ENCODE measurements at regions of chr18 and their contacts with region 1.

Region 1: GRCh38 chr18:31819106-31819924 is 58.6 kb upstream of the SLC25A52 start:
- DNase-seq: no peak
- ATAC-seq: peak; percentile 63
- H3K4me3 Mint-ChIP-seq: no peak overlapping the region
- H3K27ac Mint-ChIP-seq: no peak overlapping the region
- H3K4me1 Mint-ChIP-seq: no peaks in the 10 kb centered on the region
- H3K27me3 Mint-ChIP-seq: peaks cover 2% of the 10 kb centered on the region

Region 2: DNA sequence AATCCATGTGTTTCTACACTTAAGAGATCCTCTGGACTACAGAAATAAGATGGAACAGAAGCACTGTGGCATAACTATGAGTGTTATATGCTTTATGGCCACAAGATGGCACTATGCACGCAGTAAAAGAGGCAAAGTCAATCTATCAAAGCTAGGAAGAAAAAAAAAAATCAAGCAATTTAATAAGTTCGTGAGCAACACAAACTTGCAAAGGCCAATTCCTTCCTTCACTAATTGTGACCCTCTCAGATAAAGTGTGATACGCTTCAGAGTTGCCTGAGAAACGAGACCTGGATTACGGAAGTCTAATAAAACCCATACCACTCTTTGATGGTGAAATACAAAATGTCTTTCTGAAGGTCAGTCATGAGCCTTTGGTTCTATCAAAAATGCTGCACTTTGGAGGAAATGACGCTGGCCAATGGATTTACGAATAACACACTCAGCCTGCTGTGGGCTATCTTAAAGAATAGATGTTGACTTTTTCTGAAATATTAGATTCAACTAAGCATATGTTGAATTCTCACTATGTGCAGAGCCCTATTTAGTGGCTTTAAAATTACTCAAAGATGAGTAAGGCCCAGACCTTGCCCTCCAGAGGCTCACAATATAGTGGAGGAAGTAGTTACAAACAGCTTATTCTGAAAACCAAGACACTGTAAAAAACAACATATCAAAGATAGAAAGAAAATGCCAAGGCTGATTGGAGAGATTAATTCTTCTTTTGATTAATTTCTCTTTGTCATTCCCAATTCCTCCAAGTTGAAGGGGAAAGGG is 263.2 kb before region 1 on chr18:
- CTCF ChIA-PET with region 1: interaction called, 3 read pairs
- POLR2A ChIA-PET with region 1: no interaction called
- intact Hi-C with region 1: loop called (anchors 1 kb)
- DNase-seq: peak; percentile 56
- ATAC-seq: peak; percentile 61
- H3K4me3 Mint-ChIP-seq: no peak overlapping the region
- H3K27ac Mint-ChIP-seq: no peak overlapping the region
- H3K4me1 Mint-ChIP-seq: peaks cover 2% of the 10 kb centered on the region
- H3K27me3 Mint-ChIP-seq: peaks cover 5% of the 10 kb centered on the region

Region 3: DNA sequence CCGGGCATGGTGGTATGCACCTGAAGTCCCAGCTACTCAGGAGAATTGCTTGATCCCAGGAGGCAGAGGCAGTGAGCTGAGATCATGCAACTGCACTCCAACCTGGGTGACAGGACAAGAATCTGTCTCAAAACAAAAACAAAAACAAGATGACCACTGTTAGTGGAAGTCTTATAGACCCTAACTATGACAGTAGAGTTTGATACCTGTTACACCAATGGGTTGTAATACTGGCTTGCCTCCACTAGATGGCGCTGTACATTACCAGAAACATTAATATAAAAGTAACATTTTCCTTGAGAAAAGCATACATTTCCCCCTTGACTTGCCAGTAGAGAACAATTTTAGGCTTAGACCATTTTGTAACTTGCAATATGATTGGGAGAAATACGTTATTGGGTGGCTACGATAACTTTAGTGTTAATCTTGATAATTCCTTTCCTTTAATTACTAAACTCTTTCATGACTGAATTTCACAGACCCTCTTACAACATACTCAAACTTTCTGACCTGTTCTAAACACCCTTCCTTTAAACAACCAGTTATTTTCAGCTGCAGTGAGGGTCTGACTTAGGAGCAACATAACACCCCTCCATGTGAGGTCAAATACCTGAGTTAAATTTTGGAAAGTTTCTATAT is 78.1 kb before region 1 on chr18:
- CTCF ChIA-PET with region 1: interaction called, 3 read pairs
- POLR2A ChIA-PET with region 1: no interaction called
- intact Hi-C with region 1: loop called (anchors 1 kb)
- DNase-seq: peak; percentile 73
- ATAC-seq: no peak
- H3K4me3 Mint-ChIP-seq: no peak overlapping the region
- H3K27ac Mint-ChIP-seq: no peak overlapping the region
- H3K4me1 Mint-ChIP-seq: no peaks in the 10 kb centered on the region
- H3K27me3 Mint-ChIP-seq: no peaks in the 10 kb centered on the region

Region 4: DNA sequence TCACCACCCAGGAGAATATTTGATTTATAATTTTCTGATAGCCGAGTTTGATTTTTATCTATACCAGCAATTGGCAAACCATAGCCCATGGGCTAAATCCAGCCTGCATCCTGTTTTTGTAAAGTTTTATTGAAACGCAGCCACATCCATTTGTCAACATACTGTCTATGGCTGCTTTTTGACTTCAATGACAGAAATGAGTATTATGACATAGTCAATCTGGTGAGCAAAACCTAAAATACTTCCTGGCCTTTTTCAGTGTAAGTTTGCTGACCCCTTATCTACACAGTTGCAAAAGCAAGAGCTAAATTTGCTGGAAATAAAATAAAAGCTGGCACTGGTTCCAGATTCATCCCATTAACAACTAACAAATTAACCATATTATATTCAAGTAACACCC is 21.2 kb after region 1 on chr18:
- CTCF ChIA-PET with region 1: interaction called, 16 read pairs
- POLR2A ChIA-PET with region 1: no interaction called
- intact Hi-C with region 1: no loop called
- DNase-seq: no peak
- ATAC-seq: no peak
- H3K4me3 Mint-ChIP-seq: no peak overlapping the region
- H3K27ac Mint-ChIP-seq: no peak overlapping the region
- H3K4me1 Mint-ChIP-seq: no peaks in the 10 kb centered on the region
- H3K27me3 Mint-ChIP-seq: no peaks in the 10 kb centered on the region

Region 5: DNA sequence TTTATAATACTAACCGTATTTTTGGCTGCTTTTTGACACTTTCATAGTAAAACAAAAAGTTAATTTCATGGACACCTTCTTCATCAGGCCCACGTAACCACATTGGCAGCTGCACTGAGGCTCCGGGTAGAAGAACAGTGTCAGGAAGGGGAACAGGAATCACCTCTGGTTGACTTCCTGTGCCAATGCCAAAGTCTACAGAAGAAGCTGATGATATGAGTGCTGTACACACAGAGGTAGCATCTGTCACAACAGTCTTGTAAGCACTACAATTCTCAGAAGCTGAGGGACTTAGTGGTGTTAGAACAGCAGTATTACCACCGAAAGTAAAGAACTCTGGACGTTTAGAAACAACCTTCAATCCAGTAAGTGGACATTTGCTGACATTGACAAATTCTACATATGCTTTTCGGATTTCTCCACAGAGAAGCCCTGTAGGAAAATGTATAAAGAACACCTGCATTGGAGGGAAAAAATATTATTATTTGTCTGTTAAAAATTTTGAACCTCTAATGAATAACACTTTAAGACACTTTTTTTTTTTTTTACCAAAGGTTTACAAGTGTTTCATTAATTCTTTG is 38.3 kb after region 1 on chr18:
- CTCF ChIA-PET with region 1: no interaction called
- POLR2A ChIA-PET with region 1: no interaction called
- intact Hi-C with region 1: no loop called
- DNase-seq: no peak
- ATAC-seq: no peak
- H3K4me3 Mint-ChIP-seq: no peak overlapping the region
- H3K27ac Mint-ChIP-seq: no peak overlapping the region
- H3K4me1 Mint-ChIP-seq: peaks cover 2% of the 10 kb centered on the region
- H3K27me3 Mint-ChIP-seq: no peaks in the 10 kb centered on the region

Region 6: GRCh38 chr18:32029558-32029957 is 210.2 kb after region 1 on chr18:
- CTCF ChIA-PET with region 1: no interaction called
- POLR2A ChIA-PET with region 1: no interaction called
- intact Hi-C with region 1: no loop called
- DNase-seq: no peak
- ATAC-seq: peak; percentile 60
- H3K4me3 Mint-ChIP-seq: no peak overlapping the region
- H3K27ac Mint-ChIP-seq: peak overlapping the region; percentile 72
- H3K4me1 Mint-ChIP-seq: peaks cover 84% of the 10 kb centered on the region
- H3K27me3 Mint-ChIP-seq: no peaks in the 10 kb centered on the region

Measured in activated CD4-positive, alpha-beta T cell treated with anti-CD3 and anti-CD28 coated beads for 36 hours (primary cell).